ENCODE measurements at regions of chr22 and their contacts with region 1.

Region 1: DNA sequence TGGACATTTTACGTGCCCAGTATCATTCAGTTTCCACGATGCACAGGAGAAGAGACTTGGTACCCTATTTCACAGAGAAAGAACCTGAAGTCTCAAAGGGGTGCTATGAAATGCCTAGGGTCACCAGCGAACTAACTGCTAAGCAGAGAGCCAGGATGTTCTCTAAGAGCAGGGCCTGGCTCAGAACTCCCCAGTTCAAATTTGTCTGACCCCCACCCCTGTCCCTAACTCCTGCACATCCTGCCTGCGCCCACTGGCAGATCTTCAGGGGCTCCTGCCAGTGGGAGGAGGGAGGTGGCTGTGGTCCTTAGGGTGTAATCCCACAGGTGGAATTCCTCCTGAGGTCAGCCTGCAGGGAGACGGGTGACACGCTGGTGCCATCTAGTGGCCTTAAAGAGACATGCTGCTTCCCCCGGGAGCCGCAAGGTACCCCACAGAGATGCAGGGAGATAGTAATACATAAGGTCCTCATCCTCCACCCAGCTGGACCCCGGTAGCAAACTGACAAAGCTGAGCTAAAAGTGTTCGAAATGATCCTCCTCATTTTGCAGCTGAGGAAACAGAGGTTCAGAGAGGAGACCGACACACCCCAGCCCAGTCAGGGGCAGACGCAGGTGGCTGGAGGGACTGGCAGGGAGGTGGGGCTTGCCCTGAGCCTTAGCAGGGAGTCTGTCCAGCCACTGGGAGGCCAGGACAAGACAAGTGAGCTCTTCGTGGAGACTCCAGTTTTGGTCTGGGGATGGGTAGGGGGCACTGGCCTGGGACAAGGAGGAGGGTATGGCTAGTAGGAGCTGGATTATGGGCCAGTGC is 34.1 kb downstream of the MB start:
- DNase-seq: peak; percentile 65
- ATAC-seq: peak; percentile 95
- H3K4me3 ChIP-seq: no peak overlapping the region
- H3K27ac ChIP-seq: no peak overlapping the region
- H3K4me1 ChIP-seq: peaks cover 4 to 23% of the 10 kb centered on the region in 2 experiments
- H3K27me3 ChIP-seq: no peaks in the 10 kb centered on the region
- CTCF ChIP-seq: peak; percentile 61 to 92 (median 91); a peak in 5 of 6 replicates
- POLR2A ChIP-seq: no peak
- RAD21 ChIP-seq: peak; percentile 94

Region 2: DNA sequence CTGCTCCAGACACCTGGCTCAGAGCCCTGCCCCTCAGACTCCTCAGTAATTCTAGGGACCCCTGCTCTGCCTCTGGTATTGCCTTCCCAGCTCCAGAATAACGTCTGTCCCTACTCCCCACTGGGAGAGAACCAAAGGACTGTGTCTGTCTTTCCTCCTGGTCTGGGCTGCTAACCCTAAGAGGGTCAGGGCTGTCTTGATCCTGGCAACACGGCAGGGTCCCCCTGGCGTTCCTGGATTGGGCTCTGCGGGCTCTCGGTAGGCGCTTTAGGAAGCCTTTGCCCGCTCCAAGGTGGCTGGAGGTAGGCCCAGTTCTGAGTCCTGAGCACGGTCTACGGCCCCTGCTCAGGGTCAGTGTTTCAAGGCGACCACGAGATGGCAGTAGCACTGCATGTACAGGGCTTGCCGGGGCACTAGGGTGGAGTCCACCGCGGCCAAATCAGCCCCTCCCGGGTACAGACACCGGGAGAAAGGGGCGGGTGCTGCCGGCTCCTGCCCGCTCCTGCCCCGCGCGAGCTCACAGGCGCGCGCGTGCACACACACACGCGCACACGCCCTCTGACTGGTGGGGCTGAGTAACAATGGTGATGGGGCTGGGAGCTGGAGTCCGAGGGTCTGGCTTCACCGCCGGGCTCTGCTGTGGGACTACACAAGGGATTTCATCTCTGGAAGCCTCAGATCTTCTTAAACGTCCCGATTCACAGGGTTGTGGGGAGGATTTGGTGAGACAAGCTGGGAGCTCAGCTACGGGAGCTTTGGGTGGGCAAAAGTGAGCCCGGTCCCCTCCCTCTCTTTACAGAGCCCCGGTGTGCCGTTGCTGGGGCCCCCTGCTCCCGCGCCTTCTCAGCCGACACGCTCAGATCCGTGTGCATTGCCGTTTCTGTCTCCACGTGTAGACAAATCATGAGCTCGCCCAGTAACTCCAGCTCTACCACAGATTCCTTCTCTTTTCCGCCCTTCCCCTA is 232.2 kb before region 1 on chr22:
- CTCF ChIA-PET with region 1: no interaction called
- POLR2A ChIA-PET with region 1: no interaction called
- RAD21 ChIA-PET with region 1: no interaction called
- intact Hi-C with region 1: loop called (anchors 1 kb)
- DNase-seq: peak; percentile 81
- ATAC-seq: peak; percentile 99
- H3K4me3 ChIP-seq: peak overlapping the region; percentile 20 to 47; a peak in 3 of 4 replicates
- H3K27ac ChIP-seq: peak overlapping the region; percentile 34; the same call in 1 of the 2 replicates
- H3K4me1 ChIP-seq: peaks cover 2 to 27% of the 10 kb centered on the region in 2 experiments; a peak in 3 of 4 replicates
- H3K27me3 ChIP-seq: no peaks in the 10 kb centered on the region
- CTCF ChIP-seq: peak; percentile 54 to 75 (median 70)
- POLR2A ChIP-seq: peak; percentile 28
- RAD21 ChIP-seq: peak; percentile 97

Region 3: GRCh38 chr22:35430897-35431322 is 152.2 kb before region 1 on chr22:
- CTCF ChIA-PET with region 1: interaction called, 5 read pairs
- POLR2A ChIA-PET with region 1: no interaction called
- RAD21 ChIA-PET with region 1: interaction called in 1 of 2 experiments, 4 read pairs
- intact Hi-C with region 1: loop called (anchors 1 kb)
- DNase-seq: peak; percentile 32
- ATAC-seq: peak; percentile 88
- H3K4me3 ChIP-seq: no peak overlapping the region
- H3K27ac ChIP-seq: peak overlapping the region; percentile 13; the same call in 1 of the 2 replicates
- H3K4me1 ChIP-seq: peaks cover 11 to 14% of the 10 kb centered on the region in 2 experiments
- H3K27me3 ChIP-seq: no peaks in the 10 kb centered on the region
- CTCF ChIP-seq: peak; percentile 75 to 98 (median 94)
- POLR2A ChIP-seq: no peak
- RAD21 ChIP-seq: peak; percentile 88

Region 4: DNA sequence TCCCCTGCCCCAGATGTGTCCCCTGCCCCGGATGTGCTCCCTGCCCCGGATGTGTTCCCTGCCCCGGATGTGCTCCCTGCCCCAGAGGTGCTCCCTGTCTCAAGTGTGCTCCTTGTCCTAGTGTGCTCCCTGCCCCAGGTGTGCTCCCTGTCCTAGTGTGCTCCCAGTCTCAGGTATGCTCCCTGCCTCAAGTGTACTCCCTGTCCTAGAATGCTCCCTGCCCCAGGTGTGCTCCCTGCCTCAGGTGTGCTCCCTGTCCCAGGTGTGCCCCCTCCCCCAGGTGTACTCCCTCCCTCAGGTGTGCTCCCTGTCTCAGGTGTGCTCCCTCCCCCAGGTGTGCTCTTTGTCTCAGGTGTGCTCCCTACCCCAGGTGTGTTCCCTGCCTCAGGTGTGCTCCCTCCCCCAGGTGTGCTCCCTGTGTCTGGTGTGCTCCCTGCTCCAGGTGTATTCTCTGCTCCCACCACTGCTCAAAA is 91.1 kb before region 1 on chr22:
- CTCF ChIA-PET with region 1: no interaction called
- POLR2A ChIA-PET with region 1: no interaction called
- RAD21 ChIA-PET with region 1: interaction called in 1 of 2 experiments, 5 read pairs
- intact Hi-C with region 1: loop called (anchors 1 kb)
- DNase-seq: peak; percentile 79
- ATAC-seq: peak; percentile 72
- H3K4me3 ChIP-seq: peak overlapping the region; percentile 82 to 83
- H3K27ac ChIP-seq: peak overlapping the region; percentile 97
- H3K4me1 ChIP-seq: peaks cover 6 to 16% of the 10 kb centered on the region in 2 experiments; a peak in 3 of 4 replicates
- H3K27me3 ChIP-seq: no peaks in the 10 kb centered on the region
- CTCF ChIP-seq: no peak
- POLR2A ChIP-seq: no peak
- RAD21 ChIP-seq: peak; percentile 24; the same call in 1 of the 2 replicates

Region 5: GRCh38 chr22:35570686-35571194 is 12.3 kb before region 1 on chr22:
- CTCF ChIA-PET with region 1: no interaction called
- POLR2A ChIA-PET with region 1: no interaction called
- RAD21 ChIA-PET with region 1: no interaction called
- intact Hi-C with region 1: no loop called
- DNase-seq: no peak
- ATAC-seq: no peak
- H3K4me3 ChIP-seq: no peak overlapping the region
- H3K27ac ChIP-seq: no peak overlapping the region
- H3K4me1 ChIP-seq: peaks cover 11 to 17% of the 10 kb centered on the region in 2 experiments
- H3K27me3 ChIP-seq: no peaks in the 10 kb centered on the region
- CTCF ChIP-seq: no peak
- POLR2A ChIP-seq: no peak
- RAD21 ChIP-seq: no peak